ENCODE measurements at regions of chr4 and their contacts with region 1.

Region 1: DNA sequence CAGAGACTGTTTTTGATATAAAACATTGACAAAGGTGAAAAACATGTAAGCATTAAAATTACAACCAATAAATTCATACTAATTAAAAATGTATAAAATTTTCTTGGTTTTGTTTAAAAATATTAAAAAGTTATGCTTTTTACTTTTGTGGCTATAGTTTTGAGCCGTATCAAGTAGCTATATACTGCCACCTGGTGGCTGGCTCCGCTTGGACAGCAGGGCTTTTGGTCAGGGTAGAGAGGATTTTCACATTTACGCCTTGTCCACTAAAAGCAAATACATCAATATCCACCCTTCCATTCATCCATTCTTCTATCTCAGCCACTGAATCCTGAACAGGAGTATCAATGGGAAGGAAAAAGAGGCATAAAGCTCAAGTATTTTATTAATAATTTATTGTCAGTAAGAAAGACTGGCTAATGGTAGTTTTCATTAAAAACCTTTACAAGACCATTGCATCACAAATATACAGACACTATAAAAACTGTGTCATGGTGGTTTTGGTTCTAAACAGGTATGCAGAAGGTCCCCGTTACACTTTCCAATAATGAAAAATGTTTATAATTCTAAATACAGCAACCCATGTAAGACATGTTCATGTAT is 32.1 kb upstream of the MTNR1A start:
- DNase-seq: peak in 5 of 6 donors; percentile 50 to 89 (median 71)
- ATAC-seq: peak; percentile 82 to 90 (median 86)
- H3K4me3 ChIP-seq: no peak overlapping the region
- H3K27ac ChIP-seq: no peak overlapping the region
- H3K4me1 ChIP-seq: peaks cover 0 to 5% (median 0%) of the 10 kb centered on the region in 3 donors
- H3K27me3 ChIP-seq: no peaks in the 10 kb centered on the region
- CTCF ChIP-seq: peak; percentile 72 to 93 (median 88)

Region 2: GRCh38 chr4:186297013-186297645 is 290.4 kb before region 1 on chr4:
- intact Hi-C with region 1: loop called in 2 of 3 experiments (anchors 5 kb)
- DNase-seq: peak in 1 of 6 donors; percentile 22
- ATAC-seq: peak in 3 of 4 donors; percentile 76 to 86 (median 81)
- H3K4me3 ChIP-seq: peak overlapping the region in 1 of 4 donors; percentile 10
- H3K27ac ChIP-seq: peak overlapping the region in 1 of 4 donors; percentile 33
- H3K4me1 ChIP-seq: peaks cover 0 to 5% (median 0%) of the 10 kb centered on the region in 3 donors
- H3K27me3 ChIP-seq: no peaks in the 10 kb centered on the region
- CTCF ChIP-seq: peak; percentile 23 to 69 (median 56)

Region 3: GRCh38 chr4:186472948-186473347 is 114.6 kb before region 1 on chr4:
- intact Hi-C with region 1: loop called in 1 of 3 experiments (anchors 10 kb)
- DNase-seq: no peak
- ATAC-seq: peak in 2 of 4 donors; percentile 53 to 59
- H3K4me3 ChIP-seq: no peak overlapping the region
- H3K27ac ChIP-seq: no peak overlapping the region
- H3K4me1 ChIP-seq: no peaks in the 10 kb centered on the region
- H3K27me3 ChIP-seq: no peaks in the 10 kb centered on the region
- CTCF ChIP-seq: peak; percentile 10 to 46 (median 37)

Region 4: DNA sequence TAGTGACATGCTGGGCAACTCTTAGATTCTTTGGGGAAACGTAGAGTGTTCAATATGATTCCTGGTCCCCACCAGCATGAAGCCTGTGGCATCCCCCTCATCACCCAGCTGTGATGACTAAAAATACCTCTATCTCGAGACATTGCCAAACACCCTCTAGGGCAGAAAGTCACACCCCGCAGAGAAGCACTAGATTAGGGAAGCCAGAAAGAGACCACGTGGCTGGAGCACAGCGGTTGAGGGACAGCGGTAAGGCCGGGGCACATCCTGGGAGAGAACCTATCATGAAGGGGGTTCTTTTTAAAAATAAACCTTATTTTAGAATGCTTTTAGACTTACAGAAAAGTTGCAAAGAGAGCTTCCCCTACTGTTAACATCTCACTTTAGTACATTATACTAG is 125.2 kb after region 1 on chr4:
- intact Hi-C with region 1: no loop called
- DNase-seq: no peak
- ATAC-seq: no peak
- H3K4me3 ChIP-seq: no peak overlapping the region
- H3K27ac ChIP-seq: no peak overlapping the region
- H3K4me1 ChIP-seq: peaks cover 0 to 11% (median 4%) of the 10 kb centered on the region in 3 donors
- H3K27me3 ChIP-seq: no peaks in the 10 kb centered on the region
- CTCF ChIP-seq: no peak

Region 5: GRCh38 chr4:187302457-187303150 is 715.1 kb after region 1 on chr4:
- intact Hi-C with region 1: no loop called
- DNase-seq: no peak
- ATAC-seq: no peak
- H3K4me3 ChIP-seq: no peak overlapping the region
- H3K27ac ChIP-seq: no peak overlapping the region
- H3K4me1 ChIP-seq: no peaks in the 10 kb centered on the region
- H3K27me3 ChIP-seq: no peaks in the 10 kb centered on the region
- CTCF ChIP-seq: no peak